H1 (cell line): ENCODE measurements at regions of chr15 and their contacts with region 1.

Region 1: DNA sequence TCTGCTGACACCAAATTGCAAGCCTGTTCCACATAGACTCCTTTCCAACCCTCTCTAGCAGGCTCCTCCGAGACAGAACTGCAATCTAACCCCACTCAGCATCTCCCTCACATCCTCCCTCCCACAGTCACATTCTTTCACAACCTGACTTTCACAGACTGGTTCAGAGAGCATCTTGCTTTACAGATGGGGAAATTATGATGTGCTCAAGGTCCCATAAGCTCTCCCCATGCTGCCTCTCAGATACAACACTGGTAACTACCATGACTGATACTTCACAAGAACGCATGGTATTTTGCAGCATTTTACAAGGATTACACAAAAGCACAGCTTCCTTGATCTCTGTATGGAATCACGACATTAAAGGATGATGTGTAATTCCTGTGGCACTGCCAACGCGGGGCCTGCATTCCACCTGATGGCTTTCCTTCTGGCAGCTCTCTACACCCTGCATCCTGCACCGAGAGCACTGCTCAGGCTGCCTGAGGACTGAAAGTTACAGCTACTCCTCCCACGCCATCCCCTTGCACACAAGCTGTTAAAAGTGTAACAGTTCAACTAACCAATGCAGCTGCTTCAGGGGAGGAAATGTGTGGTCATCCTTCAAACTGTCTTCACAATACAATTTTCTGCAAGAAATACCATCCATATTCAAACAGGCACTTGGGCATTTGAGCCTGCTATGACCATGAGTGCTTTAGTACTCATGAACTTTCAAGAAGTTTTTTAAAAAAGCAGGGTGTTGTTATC is 27.6 kb downstream of the TBC1D2B start:
- DNase-seq: no peak
- H3K4me3 ChIP-seq: no peak overlapping the region
- H3K27ac ChIP-seq: no peak overlapping the region
- H3K4me1 ChIP-seq: peaks cover 0 to 6% (median 4%) of the 10 kb centered on the region in 4 experiments; a peak in 2 of 7 replicates
- H3K27me3 ChIP-seq: no peaks in the 10 kb centered on the region
- CTCF ChIP-seq: no peak
- EP300 ChIP-seq: no peak
- POLR2A ChIP-seq: no peak
- RAD21 ChIP-seq: no peak

Region 2: GRCh38 chr15:78034495-78035191 is 15.2 kb before region 1 on chr15:
- CTCF ChIA-PET with region 1: interaction called, 11 read pairs
- POLR2A ChIA-PET with region 1: no interaction called
- DNase-seq: no peak
- H3K4me3 ChIP-seq: no peak overlapping the region
- H3K27ac ChIP-seq: no peak overlapping the region
- H3K4me1 ChIP-seq: peaks cover 0 to 3% (median 0%) of the 10 kb centered on the region in 4 experiments; a peak in 1 of 7 replicates
- H3K27me3 ChIP-seq: no peaks in the 10 kb centered on the region
- CTCF ChIP-seq: no peak
- EP300 ChIP-seq: no peak
- POLR2A ChIP-seq: no peak
- RAD21 ChIP-seq: no peak